Transverse colon (tissue), 4 donors: ENCODE measurements at regions of chr5 and their contacts with region 1.

Region 1: DNA sequence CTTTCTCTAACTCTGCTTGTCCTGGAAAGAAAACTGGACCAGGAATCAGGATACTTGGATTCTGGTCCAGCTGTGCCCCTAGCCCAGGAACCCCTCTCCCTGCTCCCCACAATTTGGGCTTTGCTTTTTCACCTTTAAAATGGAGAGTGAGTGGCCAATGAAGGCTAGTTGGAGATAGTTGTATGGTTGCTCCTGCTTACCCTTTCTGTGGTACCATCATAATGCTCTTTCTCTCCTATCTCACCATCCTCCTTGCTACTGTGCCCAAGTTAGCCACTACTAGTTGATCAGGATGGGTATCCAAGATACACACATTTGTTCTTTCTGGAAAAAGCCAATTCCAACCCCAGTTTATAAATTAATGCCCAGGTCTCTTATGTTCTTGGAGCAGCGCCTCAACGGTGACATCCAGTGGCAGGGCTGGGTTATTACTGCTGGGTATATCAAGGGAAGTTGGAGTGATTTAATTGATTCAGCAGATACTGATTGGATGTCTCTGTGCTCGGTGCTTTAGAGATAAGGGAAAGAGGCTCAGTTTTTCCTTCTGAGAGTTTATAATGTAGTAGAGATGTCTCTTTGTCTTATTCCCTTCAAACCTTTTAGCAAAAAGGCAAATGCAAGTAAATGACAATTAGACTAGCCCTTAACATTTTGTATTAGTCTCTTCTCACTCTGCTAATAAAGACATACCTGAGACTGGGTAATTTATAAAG is 38.6 kb downstream of the FAXDC2 start:
- DNase-seq: peak; percentile 62
- H3K4me3 ChIP-seq: no peak overlapping the region
- H3K27ac ChIP-seq: no peak overlapping the region
- H3K4me1 ChIP-seq: peaks cover 0 to 3% (median 0%) of the 10 kb centered on the region in 4 donors
- H3K27me3 ChIP-seq: no peaks in the 10 kb centered on the region
- CTCF ChIP-seq: peak; percentile 89 to 96 (median 89)
- EP300 ChIP-seq: no peak
- POLR2A ChIP-seq: no peak

Region 2: DNA sequence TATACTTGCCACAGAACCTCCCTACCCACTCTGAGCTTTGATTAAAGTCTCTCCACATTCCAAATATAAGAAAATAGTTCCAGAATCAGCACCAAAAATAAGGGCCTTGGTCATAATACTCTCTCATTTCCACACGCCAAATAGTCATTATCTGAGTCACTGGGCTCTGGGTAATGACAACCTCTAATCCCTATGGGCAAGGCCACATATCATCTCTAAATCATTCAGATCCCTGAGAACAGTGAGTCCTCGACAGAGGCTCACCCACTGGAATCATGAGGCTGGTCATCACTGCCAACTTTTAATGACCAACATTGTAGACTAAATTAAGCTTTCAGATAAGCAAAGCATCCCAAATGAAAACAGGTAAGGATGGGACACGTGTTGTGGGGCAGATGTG is 801.1 kb before region 1 on chr5:
- in situ Hi-C with region 1: no loop called
- intact Hi-C with region 1: no loop called
- DNase-seq: no peak
- H3K4me3 ChIP-seq: no peak overlapping the region
- H3K27ac ChIP-seq: no peak overlapping the region
- H3K4me1 ChIP-seq: no peaks in the 10 kb centered on the region
- H3K27me3 ChIP-seq: no peaks in the 10 kb centered on the region
- CTCF ChIP-seq: no peak
- EP300 ChIP-seq: no peak
- POLR2A ChIP-seq: no peak

Region 3: GRCh38 chr5:154647114-154647760 is 164.6 kb before region 1 on chr5:
- in situ Hi-C with region 1: loop called (anchors 5 to 10 kb)
- intact Hi-C with region 1: loop called (anchors 5 kb)
- DNase-seq: peak; percentile 78
- H3K4me3 ChIP-seq: peak overlapping the region in 3 of 4 donors; percentile 10 to 50 (median 11)
- H3K27ac ChIP-seq: peak overlapping the region in 1 of 4 donors; percentile 14
- H3K4me1 ChIP-seq: peaks cover 7 to 18% (median 14%) of the 10 kb centered on the region in 4 donors
- H3K27me3 ChIP-seq: no peaks in the 10 kb centered on the region
- CTCF ChIP-seq: no peak
- EP300 ChIP-seq: no peak
- POLR2A ChIP-seq: no peak

Region 4: GRCh38 chr5:154749491-154749890 is 62.3 kb before region 1 on chr5:
- in situ Hi-C with region 1: no loop called
- intact Hi-C with region 1: no loop called
- DNase-seq: no peak
- H3K4me3 ChIP-seq: no peak overlapping the region
- H3K27ac ChIP-seq: no peak overlapping the region
- H3K4me1 ChIP-seq: peaks cover 10 to 15% (median 13%) of the 10 kb centered on the region in 4 donors
- H3K27me3 ChIP-seq: no peaks in the 10 kb centered on the region
- CTCF ChIP-seq: no peak
- EP300 ChIP-seq: no peak
- POLR2A ChIP-seq: no peak